IMR-90 (cell line): ENCODE measurements at regions of chr12 and their contacts with region 1.

Region 1: GRCh38 chr12:65823513-65824375 is 539 bp upstream of the HMGA2 start:
- DNase-seq: peak; percentile 58
- ATAC-seq: peak; percentile 31
- H3K4me3 ChIP-seq: peak overlapping the region; percentile 93
- H3K27ac ChIP-seq: peak overlapping the region; percentile 99
- H3K4me1 ChIP-seq: peaks cover 9% of the 10 kb centered on the region; the same call in 1 of the 2 replicates
- H3K27me3 ChIP-seq: no peaks in the 10 kb centered on the region
- CTCF ChIP-seq: no peak
- POLR2A ChIP-seq: no peak
- RAD21 ChIP-seq: peak; percentile 1; the same call in 1 of the 2 replicates

Region 2: DNA sequence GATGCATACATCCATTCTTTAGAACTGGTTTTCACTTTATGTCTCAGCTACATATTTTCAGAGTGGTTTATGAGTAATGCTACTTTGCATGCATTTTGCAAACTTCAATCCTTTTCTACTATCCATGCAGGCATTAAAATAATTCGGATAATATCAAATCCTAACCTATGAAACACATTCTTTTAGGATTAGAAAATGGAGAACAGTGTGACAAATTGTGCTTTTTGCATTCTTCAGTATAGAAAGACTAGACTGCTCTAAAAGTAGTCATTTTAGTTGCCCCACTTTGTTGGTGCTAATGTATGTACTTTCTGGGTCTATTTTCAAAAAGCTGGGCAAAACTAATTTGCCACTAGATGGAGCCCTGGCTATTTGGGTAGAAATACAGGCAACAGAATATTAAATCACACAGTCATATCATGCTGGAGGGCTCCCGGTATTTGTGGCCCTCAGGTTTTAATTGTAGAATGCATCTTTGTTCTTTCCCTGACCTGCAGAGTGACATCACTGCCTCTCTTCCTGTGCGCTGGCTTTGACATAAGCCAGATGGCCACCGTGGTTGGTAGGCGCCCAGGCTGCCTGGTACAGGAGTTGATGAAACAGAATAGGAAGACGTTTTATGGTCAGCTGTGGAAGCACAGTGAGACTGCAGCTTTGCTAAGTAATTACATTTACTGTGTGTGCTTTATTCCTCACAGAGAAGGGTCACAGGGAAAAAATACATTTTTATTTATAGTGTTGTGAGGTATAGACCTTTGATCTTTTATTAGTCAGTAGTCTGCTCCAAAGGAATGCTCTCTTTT is 517.2 kb before region 1 on chr12:
- CTCF ChIA-PET with region 1: no interaction called
- POLR2A ChIA-PET with region 1: no interaction called
- dilution Hi-C with region 1: no loop called
- in situ Hi-C with region 1: loop called (anchors 10 kb)
- intact Hi-C with region 1: loop called (anchors 2 kb)
- DNase-seq: peak; percentile 75
- ATAC-seq: peak; percentile 62
- H3K4me3 ChIP-seq: no peak overlapping the region
- H3K27ac ChIP-seq: peak overlapping the region; percentile 83
- H3K4me1 ChIP-seq: peaks cover 17% of the 10 kb centered on the region
- H3K27me3 ChIP-seq: no peaks in the 10 kb centered on the region
- CTCF ChIP-seq: peak; percentile 72
- POLR2A ChIP-seq: no peak
- RAD21 ChIP-seq: peak; percentile 78

Region 3: GRCh38 chr12:65536876-65537661 is 286.7 kb before region 1 on chr12:
- CTCF ChIA-PET with region 1: no interaction called
- POLR2A ChIA-PET with region 1: no interaction called
- dilution Hi-C with region 1: no loop called
- in situ Hi-C with region 1: no loop called
- intact Hi-C with region 1: no loop called
- DNase-seq: peak; percentile 100
- ATAC-seq: peak; percentile 91
- H3K4me3 ChIP-seq: no peak overlapping the region
- H3K27ac ChIP-seq: peak overlapping the region; percentile 76
- H3K4me1 ChIP-seq: peaks cover 39% of the 10 kb centered on the region
- H3K27me3 ChIP-seq: no peaks in the 10 kb centered on the region
- CTCF ChIP-seq: no peak
- POLR2A ChIP-seq: no peak; the same call in none of the 2 replicates
- RAD21 ChIP-seq: peak; percentile 38; the same call in 1 of the 2 replicates

Region 4: DNA sequence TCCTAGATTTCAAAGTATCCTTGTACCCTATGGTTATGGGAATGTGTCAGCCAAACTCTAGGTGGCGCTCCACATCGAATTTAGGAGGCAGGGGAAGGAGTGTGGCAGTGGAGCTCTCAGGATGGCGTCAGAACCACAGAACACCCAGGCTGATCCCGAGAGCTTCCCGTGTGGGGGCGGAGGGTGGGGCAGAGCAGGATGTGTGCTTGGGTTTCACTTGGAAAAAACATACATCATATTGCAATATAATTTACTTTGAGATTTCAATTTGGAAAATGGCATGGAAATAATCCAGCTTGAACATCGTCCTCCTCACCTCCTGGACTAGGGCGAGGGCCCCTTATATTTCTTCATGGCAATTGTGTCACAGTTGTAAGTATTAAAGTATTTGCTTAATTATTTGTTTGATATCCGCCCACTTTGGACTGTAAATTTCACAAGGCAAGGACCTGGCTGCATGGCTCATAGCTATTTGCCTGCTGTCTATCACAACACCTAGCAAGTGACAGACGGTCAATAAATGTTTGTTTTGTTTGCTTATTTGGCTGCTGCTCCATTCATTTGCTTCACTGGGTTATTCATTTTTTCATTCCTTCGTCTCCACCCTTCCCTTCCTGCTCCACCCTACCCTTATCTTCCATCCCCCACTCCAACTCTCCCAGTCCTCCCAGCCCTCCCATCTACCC is 221.0 kb before region 1 on chr12:
- CTCF ChIA-PET with region 1: no interaction called
- POLR2A ChIA-PET with region 1: interaction called, 3 read pairs
- dilution Hi-C with region 1: no loop called
- in situ Hi-C with region 1: loop called (anchors 10 kb)
- intact Hi-C with region 1: loop called (anchors 1 kb)
- DNase-seq: peak; percentile 97
- ATAC-seq: peak; percentile 92
- H3K4me3 ChIP-seq: peak overlapping the region; percentile 50
- H3K27ac ChIP-seq: peak overlapping the region; percentile 95
- H3K4me1 ChIP-seq: peaks cover 12% of the 10 kb centered on the region
- H3K27me3 ChIP-seq: no peaks in the 10 kb centered on the region
- CTCF ChIP-seq: peak; percentile 89
- POLR2A ChIP-seq: peak; percentile 74
- RAD21 ChIP-seq: peak; percentile 93

Region 5: DNA sequence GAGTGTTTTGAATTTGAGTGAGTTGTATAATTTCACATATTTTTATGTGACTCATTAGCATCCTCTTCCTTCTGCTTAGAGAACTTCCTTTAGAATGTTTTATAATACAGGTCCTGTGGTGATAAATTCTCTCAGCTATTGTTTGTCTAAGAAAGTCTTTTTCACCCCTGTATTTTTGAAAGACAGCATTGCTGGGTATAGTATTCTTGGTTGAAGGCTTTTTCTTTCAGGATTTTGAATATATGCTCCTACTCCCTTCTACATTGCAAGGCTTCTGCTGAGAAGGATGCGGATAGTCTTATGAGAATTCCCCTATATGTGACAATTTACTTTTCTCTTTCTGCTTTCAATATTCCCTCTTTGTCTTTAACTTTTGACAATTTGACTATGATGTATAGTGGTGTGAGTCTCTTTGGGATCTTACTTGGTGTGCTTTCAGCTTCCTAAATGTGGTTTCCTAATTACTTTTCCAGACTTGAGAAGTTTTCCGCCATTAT is 118.3 kb before region 1 on chr12:
- CTCF ChIA-PET with region 1: no interaction called
- POLR2A ChIA-PET with region 1: no interaction called
- dilution Hi-C with region 1: no loop called
- in situ Hi-C with region 1: no loop called
- intact Hi-C with region 1: no loop called
- DNase-seq: no peak
- ATAC-seq: no peak
- H3K4me3 ChIP-seq: no peak overlapping the region
- H3K27ac ChIP-seq: no peak overlapping the region
- H3K4me1 ChIP-seq: no peaks in the 10 kb centered on the region
- H3K27me3 ChIP-seq: no peaks in the 10 kb centered on the region
- CTCF ChIP-seq: no peak
- POLR2A ChIP-seq: no peak
- RAD21 ChIP-seq: no peak

Region 6: GRCh38 chr12:65881965-65882413 is 58.2 kb after region 1 on chr12:
- CTCF ChIA-PET with region 1: interaction called, 3 read pairs
- POLR2A ChIA-PET with region 1: no interaction called
- dilution Hi-C with region 1: no loop called
- in situ Hi-C with region 1: no loop called
- intact Hi-C with region 1: loop called (anchors 2 kb)
- DNase-seq: peak; percentile 38
- ATAC-seq: no peak
- H3K4me3 ChIP-seq: no peak overlapping the region
- H3K27ac ChIP-seq: peak overlapping the region; percentile 70; the same call in 1 of the 2 replicates
- H3K4me1 ChIP-seq: peaks cover 29% of the 10 kb centered on the region
- H3K27me3 ChIP-seq: no peaks in the 10 kb centered on the region
- CTCF ChIP-seq: 0 out of 2 replicates have a peak, but pooled peaks have one; percentile 1
- POLR2A ChIP-seq: no peak
- RAD21 ChIP-seq: no peak

Region 7: GRCh38 chr12:65986047-65986446 is 162.3 kb after region 1 on chr12:
- CTCF ChIA-PET with region 1: no interaction called
- POLR2A ChIA-PET with region 1: no interaction called
- dilution Hi-C with region 1: no loop called
- in situ Hi-C with region 1: no loop called
- intact Hi-C with region 1: loop called (anchors 1 kb)
- DNase-seq: no peak
- ATAC-seq: no peak
- H3K4me3 ChIP-seq: no peak overlapping the region
- H3K27ac ChIP-seq: no peak overlapping the region
- H3K4me1 ChIP-seq: no peaks in the 10 kb centered on the region
- H3K27me3 ChIP-seq: no peaks in the 10 kb centered on the region
- CTCF ChIP-seq: no peak
- POLR2A ChIP-seq: no peak
- RAD21 ChIP-seq: no peak

Region 8: GRCh38 chr12:66107451-66107915 is 283.7 kb after region 1 on chr12:
- CTCF ChIA-PET with region 1: no interaction called
- POLR2A ChIA-PET with region 1: no interaction called
- dilution Hi-C with region 1: no loop called
- in situ Hi-C with region 1: no loop called
- intact Hi-C with region 1: loop called (anchors 2 kb)
- DNase-seq: peak; percentile 94
- ATAC-seq: peak; percentile 99
- H3K4me3 ChIP-seq: no peak overlapping the region
- H3K27ac ChIP-seq: no peak overlapping the region
- H3K4me1 ChIP-seq: peaks cover 4% of the 10 kb centered on the region
- H3K27me3 ChIP-seq: no peaks in the 10 kb centered on the region
- CTCF ChIP-seq: peak; percentile 77
- POLR2A ChIP-seq: no peak
- RAD21 ChIP-seq: peak; percentile 79